K562 (cell line): ENCODE measurements at regions of chr9 and their contacts with region 1.

Region 1: GRCh38 chr9:123544007-123544827 is 188.2 kb downstream of the CRB2 start:
- DNase-seq: peak; percentile 45 to 55 (median 50)
- ATAC-seq: peak; percentile 81
- H3K4me3 ChIP-seq: no peak overlapping the region
- H3K27ac ChIP-seq: no peak overlapping the region
- H3K4me1 ChIP-seq: peaks cover 5 to 6% of the 10 kb centered on the region in 2 experiments; a peak in 4 of 5 replicates
- H3K27me3 ChIP-seq: no peaks in the 10 kb centered on the region
- CTCF ChIP-seq: peak; percentile 70 to 89 (median 75)
- EP300 ChIP-seq: no peak
- POLR2A ChIP-seq: no peak
- RAD21 ChIP-seq: peak; percentile 94 to 96

Region 2: DNA sequence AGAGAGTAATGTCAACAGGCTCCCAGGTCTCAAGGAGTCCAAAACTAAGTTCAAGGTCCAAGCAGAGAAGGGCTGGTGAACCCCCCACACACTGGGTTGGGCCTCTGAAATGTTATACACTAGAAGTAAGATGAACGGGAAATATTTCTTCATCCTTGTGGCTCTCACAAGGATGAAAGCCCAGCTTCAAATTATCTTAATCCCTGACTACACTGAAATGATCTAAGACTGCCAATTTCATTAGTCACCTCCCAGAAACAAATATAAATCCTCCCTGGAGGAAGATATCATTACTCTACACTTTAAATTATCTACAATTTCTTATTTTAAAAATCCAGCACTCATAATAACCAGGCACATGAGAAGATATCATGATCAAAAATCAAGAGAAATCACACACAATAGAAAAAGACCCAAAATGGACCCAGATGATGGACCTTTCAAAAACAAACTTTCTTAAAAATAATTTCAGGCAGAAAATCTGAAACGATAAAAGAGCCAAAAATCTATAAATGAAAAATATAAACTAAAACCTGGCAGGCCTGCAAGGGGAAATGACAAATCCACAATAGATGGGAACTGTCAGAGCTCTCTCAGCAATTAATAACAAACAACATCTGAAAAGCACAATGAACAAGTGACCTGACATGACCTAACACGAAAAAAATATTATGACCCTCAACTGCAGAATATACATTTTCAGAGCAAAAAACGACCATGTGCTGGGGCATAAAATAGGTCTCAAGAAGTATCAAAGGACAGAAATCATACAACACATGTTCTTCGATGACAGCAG is 393.3 kb before region 1 on chr9:
- CTCF ChIA-PET with region 1: no interaction called
- POLR2A ChIA-PET with region 1: no interaction called
- in situ Hi-C with region 1: no loop called
- intact Hi-C with region 1: no loop called
- DNase-seq: no peak
- ATAC-seq: no peak
- H3K4me3 ChIP-seq: no peak overlapping the region
- H3K27ac ChIP-seq: no peak overlapping the region
- H3K4me1 ChIP-seq: no peaks in the 10 kb centered on the region
- H3K27me3 ChIP-seq: no peaks in the 10 kb centered on the region
- CTCF ChIP-seq: no peak
- EP300 ChIP-seq: no peak
- POLR2A ChIP-seq: no peak
- RAD21 ChIP-seq: no peak

Region 3: DNA sequence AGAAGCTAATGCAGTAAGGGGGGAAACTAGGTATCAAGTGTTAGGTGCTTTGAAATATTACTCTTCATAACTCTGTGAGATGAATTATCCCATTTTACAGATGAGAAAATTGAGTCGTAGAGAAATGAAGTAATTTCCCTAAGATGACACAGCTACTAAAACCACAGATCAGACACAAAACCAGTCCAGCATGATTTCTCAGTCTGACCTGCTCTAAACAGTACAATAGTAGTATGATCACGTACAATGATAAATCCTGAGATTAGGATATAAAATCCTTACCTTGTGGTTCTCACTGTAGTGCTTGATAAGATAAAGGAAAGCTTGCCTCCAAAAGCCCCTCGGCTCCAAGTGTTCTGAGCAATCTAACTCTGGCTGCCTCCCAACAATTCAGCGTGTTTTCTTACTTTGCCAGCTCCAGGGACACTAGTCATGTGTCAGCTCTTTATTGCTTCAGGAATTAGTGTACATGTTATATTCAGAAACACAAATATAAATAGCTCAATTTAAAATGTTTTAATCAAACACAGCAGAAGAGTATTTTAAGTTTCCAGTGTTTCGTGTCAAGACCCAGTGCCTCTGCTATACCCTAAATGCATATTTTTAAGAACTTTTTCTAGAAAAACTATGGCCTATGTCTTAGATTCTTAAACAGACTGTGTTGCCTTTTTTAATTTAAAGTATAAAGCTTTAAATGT is 142.1 kb after region 1 on chr9:
- CTCF ChIA-PET with region 1: no interaction called
- POLR2A ChIA-PET with region 1: no interaction called
- in situ Hi-C with region 1: no loop called
- intact Hi-C with region 1: loop called (anchors 10 kb)
- DNase-seq: no peak
- ATAC-seq: no peak
- H3K4me3 ChIP-seq: no peak overlapping the region
- H3K27ac ChIP-seq: no peak overlapping the region
- H3K4me1 ChIP-seq: no peaks in the 10 kb centered on the region
- H3K27me3 ChIP-seq: no peaks in the 10 kb centered on the region
- CTCF ChIP-seq: no peak
- EP300 ChIP-seq: no peak
- POLR2A ChIP-seq: no peak
- RAD21 ChIP-seq: no peak

Region 4: GRCh38 chr9:123954518-123955280 is 410.5 kb after region 1 on chr9:
- CTCF ChIA-PET with region 1: no interaction called
- POLR2A ChIA-PET with region 1: no interaction called
- in situ Hi-C with region 1: no loop called
- intact Hi-C with region 1: loop called (anchors 10 kb)
- DNase-seq: no peak
- ATAC-seq: no peak
- H3K4me3 ChIP-seq: no peak overlapping the region
- H3K27ac ChIP-seq: no peak overlapping the region
- H3K4me1 ChIP-seq: no peaks in the 10 kb centered on the region
- H3K27me3 ChIP-seq: peaks cover 5 to 41% of the 10 kb centered on the region in 2 experiments; a peak in 3 of 5 replicates
- CTCF ChIP-seq: no peak
- EP300 ChIP-seq: no peak
- POLR2A ChIP-seq: no peak
- RAD21 ChIP-seq: no peak

Region 5: DNA sequence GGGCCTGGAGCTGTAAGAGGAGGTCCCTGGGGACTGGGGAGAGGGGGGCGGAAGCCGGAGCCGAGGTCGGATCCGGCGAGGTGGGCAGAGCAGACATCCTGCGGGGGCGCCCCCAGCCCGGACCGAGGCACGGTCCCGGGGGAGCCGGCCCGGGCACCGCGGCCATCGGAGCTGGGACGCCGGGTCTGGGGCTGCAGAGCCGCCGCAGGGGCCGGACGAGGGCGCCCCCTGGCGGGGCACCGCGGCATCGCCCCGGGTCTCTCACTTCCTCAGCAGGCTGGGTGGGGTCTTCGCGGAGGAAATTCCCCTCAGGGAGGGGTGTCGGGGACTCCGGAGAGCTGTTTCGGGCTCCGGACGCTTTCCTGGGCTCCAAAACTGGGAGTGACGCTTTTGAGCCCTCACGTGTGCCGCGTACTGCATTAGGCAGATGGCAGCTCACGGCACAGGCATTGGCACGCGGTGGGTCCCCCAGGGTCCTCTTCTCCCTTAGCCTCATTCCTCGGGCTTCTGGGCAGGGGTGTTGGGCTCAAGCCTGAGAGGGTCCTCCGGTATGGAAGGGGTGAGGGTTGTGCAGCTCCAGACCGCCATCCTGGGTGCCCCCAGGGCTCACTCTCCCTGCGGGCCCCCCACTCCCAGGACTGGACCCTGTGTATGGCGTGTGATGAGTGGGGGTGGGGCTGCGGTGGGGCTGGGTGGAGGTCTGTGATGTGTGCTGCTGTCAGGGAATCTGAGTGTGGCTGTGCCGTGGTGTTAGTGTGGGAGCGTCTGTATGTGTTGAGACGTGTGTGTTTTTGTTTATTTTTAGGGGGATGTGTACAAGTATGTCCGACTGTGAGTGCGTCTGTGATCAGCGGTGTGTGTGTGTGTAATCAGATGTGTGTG is 497.0 kb after region 1 on chr9:
- CTCF ChIA-PET with region 1: interaction called, 27 read pairs
- POLR2A ChIA-PET with region 1: no interaction called
- in situ Hi-C with region 1: loop called (anchors 5 kb)
- intact Hi-C with region 1: loop called (anchors 2 kb)
- DNase-seq: peak; percentile 41 to 89 (median 86)
- ATAC-seq: peak; percentile 87
- H3K4me3 ChIP-seq: no peak overlapping the region
- H3K27ac ChIP-seq: no peak overlapping the region
- H3K4me1 ChIP-seq: peaks cover 2 to 20% of the 10 kb centered on the region in 2 experiments; a peak in 4 of 5 replicates
- H3K27me3 ChIP-seq: peaks cover 5 to 65% of the 10 kb centered on the region in 2 experiments; a peak in 3 of 5 replicates
- CTCF ChIP-seq: peak; percentile 81 to 86 (median 85)
- EP300 ChIP-seq: no peak
- POLR2A ChIP-seq: no peak
- RAD21 ChIP-seq: peak; percentile 73 to 86

Region 6: DNA sequence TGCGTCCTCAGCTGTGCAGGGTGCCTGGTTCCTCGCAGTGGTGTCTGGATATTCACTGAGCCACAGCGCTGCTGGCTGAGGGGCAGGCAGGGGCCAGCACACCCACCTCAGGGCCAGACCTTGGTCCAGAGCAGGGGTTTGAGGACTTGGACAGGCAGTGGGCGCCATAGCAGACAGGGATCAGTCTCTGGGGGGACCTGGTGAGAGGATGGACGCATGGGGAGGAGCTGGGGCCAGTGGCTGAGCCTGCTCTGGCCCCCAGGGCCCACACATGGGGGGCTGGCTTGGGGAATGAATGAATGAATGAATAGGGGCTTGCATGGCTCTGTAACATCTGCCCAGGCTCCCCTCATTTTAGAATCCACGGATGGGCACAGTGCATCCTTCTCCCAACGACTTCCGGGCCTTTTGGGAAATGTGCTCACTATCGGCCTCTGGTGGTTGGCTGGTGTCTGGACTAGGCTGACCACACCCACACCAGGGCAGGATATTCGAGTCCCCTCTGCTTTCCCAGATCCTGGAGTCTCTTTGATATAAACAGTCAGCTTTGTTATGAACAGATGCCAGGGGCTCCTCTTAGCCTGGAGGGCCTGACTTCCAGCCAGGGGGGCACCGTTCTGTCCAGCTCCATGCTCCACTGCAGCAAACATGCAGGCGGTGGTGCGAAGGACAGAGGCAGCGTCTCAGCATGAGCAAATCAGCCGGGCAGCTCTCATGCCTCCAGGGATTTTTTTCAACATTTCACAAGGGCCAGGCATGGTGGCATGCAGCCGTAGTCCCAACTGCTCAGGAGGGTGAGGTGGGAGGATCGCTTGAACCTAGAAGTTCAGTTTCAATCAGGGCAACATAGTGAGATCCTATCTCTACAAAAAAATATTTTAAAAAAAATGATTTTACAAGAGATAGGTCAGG is 776.1 kb after region 1 on chr9:
- CTCF ChIA-PET with region 1: no interaction called
- POLR2A ChIA-PET with region 1: no interaction called
- in situ Hi-C with region 1: loop called (anchors 25 kb)
- intact Hi-C with region 1: no loop called
- DNase-seq: peak; percentile 76 to 85 (median 82)
- ATAC-seq: peak; percentile 93
- H3K4me3 ChIP-seq: no peak overlapping the region
- H3K27ac ChIP-seq: no peak overlapping the region
- H3K4me1 ChIP-seq: peaks cover 11 to 24% of the 10 kb centered on the region in 2 experiments
- H3K27me3 ChIP-seq: no peaks in the 10 kb centered on the region
- CTCF ChIP-seq: peak; percentile 84 to 95 (median 90)
- EP300 ChIP-seq: no peak
- POLR2A ChIP-seq: no peak
- RAD21 ChIP-seq: peak; percentile 61 to 79